ENCODE measurements at regions of chr5 and their contacts with region 1.

Region 1: GRCh38 chr5:135560858-135561257 is 17.9 kb downstream of the CXCL14 start:
- DNase-seq: peak; percentile 68 to 90 (median 80)
- ATAC-seq: peak; percentile 80 to 88
- H3K4me3 ChIP-seq: no peak overlapping the region
- H3K27ac ChIP-seq: no peak overlapping the region
- H3K4me1 ChIP-seq: no peaks in the 10 kb centered on the region
- H3K27me3 ChIP-seq: no peaks in the 10 kb centered on the region

Region 2: GRCh38 chr5:135289651-135290050 is 271.2 kb before region 1 on chr5:
- intact Hi-C with region 1: no loop called
- DNase-seq: no peak
- ATAC-seq: no peak
- H3K4me3 ChIP-seq: no peak overlapping the region
- H3K27ac ChIP-seq: no peak overlapping the region
- H3K4me1 ChIP-seq: no peaks in the 10 kb centered on the region
- H3K27me3 ChIP-seq: no peaks in the 10 kb centered on the region

Region 3: DNA sequence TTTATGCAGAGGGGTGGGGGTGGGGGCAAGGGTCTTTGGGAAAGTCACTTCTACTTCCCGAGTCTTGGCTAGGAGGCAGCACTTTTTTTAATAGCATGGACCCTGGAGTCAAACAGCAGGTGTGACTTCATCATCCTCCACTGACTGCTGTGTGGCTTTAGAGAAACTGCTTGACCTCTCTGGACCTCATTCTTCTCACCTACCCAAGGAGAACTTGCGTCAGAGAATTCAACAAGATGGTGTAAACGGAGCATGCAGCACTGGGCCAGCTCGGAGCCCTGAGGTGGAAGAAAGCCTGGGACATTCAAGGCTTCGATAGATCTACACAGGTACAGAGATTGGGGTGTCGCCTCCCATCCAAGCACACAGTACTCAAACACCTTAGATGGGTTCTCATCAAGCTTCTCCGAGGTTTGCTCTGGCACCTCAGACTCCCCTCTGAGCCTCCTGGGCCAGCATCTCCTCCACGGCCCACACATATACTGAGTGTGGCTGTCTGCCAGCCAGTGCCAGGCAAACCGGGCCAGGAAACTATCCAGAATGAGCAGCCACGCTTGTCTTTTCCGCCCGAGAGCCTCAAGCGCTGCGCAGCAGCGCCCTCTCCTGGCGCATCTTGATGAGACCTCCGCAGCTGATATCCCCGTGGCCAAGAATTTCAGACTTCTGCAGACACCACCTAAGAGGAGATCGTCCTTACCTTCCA is 269.0 kb after region 1 on chr5:
- intact Hi-C with region 1: loop called (anchors 5 kb)
- DNase-seq: peak; percentile 65 to 84 (median 84)
- ATAC-seq: peak; percentile 28 to 38
- H3K4me3 ChIP-seq: no peak overlapping the region
- H3K27ac ChIP-seq: no peak overlapping the region
- H3K4me1 ChIP-seq: no peaks in the 10 kb centered on the region
- H3K27me3 ChIP-seq: no peaks in the 10 kb centered on the region

Measured in right cardiac atrium (tissue), 5 donors.